SK-N-SH (cell line): ENCODE measurements at regions of chr17 and their contacts with region 1.

Region 1: GRCh38 chr17:46832945-46833839 is 14.7 kb upstream of the WNT3 start:
- DNase-seq: no peak
- H3K4me3 ChIP-seq: no peak overlapping the region
- H3K27ac ChIP-seq: peak overlapping the region in 1 of 2 experiments; percentile 29; a peak in 2 of 4 replicates
- H3K4me1 ChIP-seq: peaks cover 0 to 8% of the 10 kb centered on the region in 2 experiments; a peak in 2 of 4 replicates
- H3K27me3 ChIP-seq: no peaks in the 10 kb centered on the region
- CTCF ChIP-seq: no peak
- EP300 ChIP-seq: no peak
- RAD21 ChIP-seq: no peak

Region 2: DNA sequence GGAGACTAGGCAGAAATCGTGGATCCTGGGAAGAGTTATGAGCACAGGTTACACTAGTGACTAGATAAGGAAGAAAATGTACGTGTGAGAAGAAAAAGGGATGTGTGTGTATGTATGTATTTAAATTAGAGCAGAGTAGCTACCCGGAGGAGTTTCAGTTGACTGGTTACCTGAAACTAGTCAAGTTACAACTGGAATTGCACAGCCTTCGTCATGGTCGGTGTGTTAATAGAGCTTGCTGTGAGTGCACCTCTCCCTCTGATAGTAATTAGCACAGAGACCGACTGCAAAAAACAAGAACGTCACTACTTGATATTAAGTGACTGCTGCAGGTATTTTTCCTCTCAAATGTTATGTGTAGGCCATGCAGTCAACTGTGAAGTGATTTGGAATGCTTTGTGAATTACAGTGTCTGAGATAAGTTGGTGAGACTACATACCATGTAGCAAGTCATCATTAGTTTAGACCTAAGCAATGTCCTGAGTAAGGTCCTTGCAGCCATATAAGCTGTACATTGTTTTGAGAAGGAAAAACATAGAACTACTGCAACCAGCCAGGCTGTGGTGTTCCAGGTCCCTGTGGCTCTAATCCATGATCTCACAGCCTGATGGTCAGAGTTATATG is 110.4 kb before region 1 on chr17:
- CTCF ChIA-PET with region 1: interaction called, 11 read pairs
- POLR2A ChIA-PET with region 1: no interaction called
- DNase-seq: no peak
- H3K4me3 ChIP-seq: no peak overlapping the region
- H3K27ac ChIP-seq: no peak overlapping the region
- H3K4me1 ChIP-seq: peaks cover 18 to 31% of the 10 kb centered on the region in 2 experiments
- H3K27me3 ChIP-seq: no peaks in the 10 kb centered on the region
- CTCF ChIP-seq: no peak
- EP300 ChIP-seq: no peak
- RAD21 ChIP-seq: no peak

Region 3: DNA sequence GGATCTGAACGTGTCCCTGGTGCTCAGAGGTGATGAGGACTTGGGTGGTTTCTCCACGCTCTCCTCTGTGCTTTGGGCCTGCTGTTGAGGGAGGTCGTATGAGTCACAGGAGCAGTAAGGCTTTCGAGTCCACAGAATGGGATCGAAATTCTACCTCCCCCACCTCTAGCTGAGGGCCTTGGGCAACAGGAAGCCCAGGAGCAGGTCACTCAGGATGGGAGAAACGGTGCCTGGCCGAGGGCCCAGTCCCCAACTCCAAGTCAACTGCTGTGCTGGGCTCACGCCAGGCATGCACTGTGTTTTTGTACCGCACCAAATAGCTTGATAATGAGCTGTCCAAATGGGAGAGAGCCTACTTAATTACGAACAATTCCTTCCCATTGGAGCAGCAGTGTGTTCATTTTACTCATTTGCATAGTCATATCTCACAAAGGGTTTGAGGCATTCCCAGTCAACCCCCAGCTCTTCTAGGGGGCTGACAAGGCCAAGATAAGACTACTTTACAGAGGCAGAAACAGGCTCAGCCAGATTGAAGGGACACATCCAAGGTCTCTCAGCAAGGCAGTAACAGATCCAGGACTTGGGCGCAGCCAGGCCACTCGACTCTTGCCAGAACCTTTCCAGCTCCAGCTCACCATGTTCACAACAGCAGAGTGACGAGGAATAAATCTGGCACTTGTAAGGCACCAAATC is 68.3 kb before region 1 on chr17:
- CTCF ChIA-PET with region 1: interaction called, 13 read pairs
- POLR2A ChIA-PET with region 1: no interaction called
- DNase-seq: peak; percentile 59
- H3K4me3 ChIP-seq: no peak overlapping the region
- H3K27ac ChIP-seq: peak overlapping the region; percentile 52 to 63
- H3K4me1 ChIP-seq: peaks cover 18 to 24% of the 10 kb centered on the region in 2 experiments; a peak in 3 of 4 replicates
- H3K27me3 ChIP-seq: no peaks in the 10 kb centered on the region
- CTCF ChIP-seq: no peak
- EP300 ChIP-seq: peak in 1 of 2 experiments; percentile 91; a peak in 1 of 4 replicates
- RAD21 ChIP-seq: no peak

Region 4: DNA sequence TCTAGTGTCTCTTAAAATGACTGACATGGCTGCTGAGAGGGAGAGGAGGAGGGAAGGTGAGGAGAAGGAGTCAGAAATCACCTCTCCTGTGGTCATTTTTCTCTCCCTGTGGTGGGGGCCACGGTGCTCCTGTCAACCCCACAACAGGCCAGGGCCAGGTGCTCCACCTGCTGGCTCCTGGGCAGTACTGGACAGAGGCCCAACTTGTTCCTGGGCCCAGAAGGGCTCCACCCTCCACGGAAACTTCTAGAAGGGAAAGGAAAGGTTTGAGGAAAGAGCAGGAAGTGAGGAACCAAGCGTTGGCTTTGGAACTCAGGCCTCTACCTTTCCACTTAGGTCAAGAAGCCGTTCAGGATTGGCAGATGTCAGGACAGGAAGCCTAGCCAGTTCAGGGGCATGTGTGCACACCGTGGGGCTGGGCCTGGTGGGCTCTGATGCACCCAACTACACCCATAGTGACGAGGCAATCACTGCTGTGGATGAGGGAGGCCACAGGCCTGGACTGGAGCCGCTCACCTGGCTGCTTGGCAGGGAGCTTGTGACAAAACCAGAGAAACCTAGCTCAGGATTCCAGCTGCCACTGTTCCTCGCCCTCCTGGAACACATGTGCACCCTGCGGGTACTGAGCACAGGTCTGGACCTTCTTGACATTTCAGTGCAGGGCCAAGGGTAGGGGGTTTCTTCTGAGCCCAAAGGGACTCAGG is 50.8 kb before region 1 on chr17:
- CTCF ChIA-PET with region 1: interaction called, 76 read pairs
- POLR2A ChIA-PET with region 1: no interaction called
- DNase-seq: peak; percentile 82
- H3K4me3 ChIP-seq: no peak overlapping the region
- H3K27ac ChIP-seq: no peak overlapping the region
- H3K4me1 ChIP-seq: peaks cover 0 to 5% of the 10 kb centered on the region in 2 experiments; a peak in 1 of 4 replicates
- H3K27me3 ChIP-seq: no peaks in the 10 kb centered on the region
- CTCF ChIP-seq: peak; percentile 91
- EP300 ChIP-seq: no peak
- RAD21 ChIP-seq: peak; percentile 80

Region 5: GRCh38 chr17:46803559-46803958 is 29.6 kb before region 1 on chr17:
- CTCF ChIA-PET with region 1: interaction called, 15 read pairs
- POLR2A ChIA-PET with region 1: no interaction called
- DNase-seq: no peak
- H3K4me3 ChIP-seq: no peak overlapping the region
- H3K27ac ChIP-seq: no peak overlapping the region
- H3K4me1 ChIP-seq: peaks cover 0 to 5% of the 10 kb centered on the region in 2 experiments; a peak in 1 of 4 replicates
- H3K27me3 ChIP-seq: no peaks in the 10 kb centered on the region
- CTCF ChIP-seq: no peak
- EP300 ChIP-seq: no peak
- RAD21 ChIP-seq: no peak

Region 6: GRCh38 chr17:46822388-46822921 is 10.7 kb before region 1 on chr17:
- CTCF ChIA-PET with region 1: interaction called, 74 read pairs
- POLR2A ChIA-PET with region 1: no interaction called
- DNase-seq: no peak
- H3K4me3 ChIP-seq: no peak overlapping the region
- H3K27ac ChIP-seq: no peak overlapping the region
- H3K4me1 ChIP-seq: no peaks in the 10 kb centered on the region
- H3K27me3 ChIP-seq: peaks cover 9% of the 10 kb centered on the region
- CTCF ChIP-seq: peak; percentile 36; the same call in 1 of the 2 replicates
- EP300 ChIP-seq: no peak
- RAD21 ChIP-seq: no peak

Region 7: GRCh38 chr17:46883871-46884520 is 50.8 kb after region 1 on chr17:
- CTCF ChIA-PET with region 1: no interaction called
- POLR2A ChIA-PET with region 1: no interaction called
- DNase-seq: no peak
- H3K4me3 ChIP-seq: no peak overlapping the region
- H3K27ac ChIP-seq: no peak overlapping the region
- H3K4me1 ChIP-seq: no peaks in the 10 kb centered on the region
- H3K27me3 ChIP-seq: peaks cover 40% of the 10 kb centered on the region; the same call in 1 of the 2 replicates
- CTCF ChIP-seq: no peak
- EP300 ChIP-seq: no peak
- RAD21 ChIP-seq: no peak